PC-9 (cell line): ENCODE measurements at regions of chr6 and their contacts with region 1.

Region 1: DNA sequence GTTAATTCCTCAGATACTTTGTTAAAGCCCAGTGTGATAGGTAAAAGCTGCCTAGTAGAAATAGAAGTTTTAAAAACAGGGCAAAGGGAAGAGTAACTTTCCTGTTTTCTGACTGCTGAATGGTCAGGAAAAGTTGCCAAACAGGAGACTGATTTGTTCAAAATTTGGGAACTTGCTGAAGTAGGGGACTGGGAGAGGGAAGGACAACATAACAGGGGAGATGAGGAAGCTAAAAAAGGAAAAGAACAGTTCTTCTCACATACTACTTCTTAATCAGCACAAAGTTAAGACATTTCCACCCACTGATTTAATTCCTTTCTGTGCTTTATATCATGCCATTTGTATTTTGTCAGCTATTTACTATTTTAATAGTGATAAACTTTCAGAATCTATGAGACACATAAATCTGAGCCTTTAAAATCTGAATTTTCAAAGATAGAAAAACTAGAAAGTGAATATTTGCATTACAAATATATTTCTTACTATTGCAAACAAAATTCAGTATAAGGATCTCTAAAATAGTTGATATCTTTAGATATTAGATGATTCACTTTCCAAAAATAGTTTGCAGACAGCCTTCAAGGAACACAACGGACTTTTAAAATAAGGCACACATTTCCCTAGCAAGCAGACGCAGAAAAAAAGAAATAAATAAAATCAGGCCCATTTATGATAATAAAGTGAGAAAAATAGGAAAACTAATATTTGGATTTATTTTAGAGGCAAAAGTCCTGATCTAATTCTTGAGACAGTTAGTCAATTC is 36.9 kb upstream of the SLC16A10 start:
- DNase-seq: no peak
- H3K4me3 ChIP-seq: no peak overlapping the region
- H3K27ac ChIP-seq: no peak overlapping the region
- H3K4me1 ChIP-seq: no peaks in the 10 kb centered on the region
- H3K27me3 ChIP-seq: no peaks in the 10 kb centered on the region
- CTCF ChIP-seq: no peak

Region 2: GRCh38 chr6:110756817-110757216 is 293.6 kb before region 1 on chr6:
- CTCF ChIA-PET with region 1: no interaction called
- POLR2A ChIA-PET with region 1: interaction called, 33 read pairs
- intact Hi-C with region 1: no loop called
- DNase-seq: no peak
- H3K4me3 ChIP-seq: no peak overlapping the region
- H3K27ac ChIP-seq: no peak overlapping the region
- H3K4me1 ChIP-seq: no peaks in the 10 kb centered on the region
- H3K27me3 ChIP-seq: no peaks in the 10 kb centered on the region
- CTCF ChIP-seq: no peak

Region 3: GRCh38 chr6:111096246-111096645 is 45.8 kb after region 1 on chr6:
- CTCF ChIA-PET with region 1: no interaction called
- POLR2A ChIA-PET with region 1: no interaction called
- intact Hi-C with region 1: no loop called
- DNase-seq: peak in 1 of 2 experiments; percentile 79
- H3K4me3 ChIP-seq: no peak overlapping the region
- H3K27ac ChIP-seq: no peak overlapping the region
- H3K4me1 ChIP-seq: no peaks in the 10 kb centered on the region
- H3K27me3 ChIP-seq: no peaks in the 10 kb centered on the region
- CTCF ChIP-seq: no peak